A673 (cell line): ENCODE measurements at regions of chr2 and their contacts with region 1.

Region 1: GRCh38 chr2:46876741-46877384 is 38.7 kb downstream of the MCFD2 start:
- DNase-seq: peak; percentile 69
- H3K4me3 ChIP-seq: no peak overlapping the region
- H3K27ac ChIP-seq: no peak overlapping the region
- H3K4me1 ChIP-seq: peaks cover 12% of the 10 kb centered on the region
- H3K27me3 ChIP-seq: no peaks in the 10 kb centered on the region
- CTCF ChIP-seq: peak; percentile 63

Region 2: GRCh38 chr2:46632349-46632748 is 244.5 kb before region 1 on chr2:
- CTCF ChIA-PET with region 1: no interaction called
- POLR2A ChIA-PET with region 1: no interaction called
- intact Hi-C with region 1: loop called (anchors 2 kb)
- DNase-seq: peak; percentile 61
- H3K4me3 ChIP-seq: no peak overlapping the region
- H3K27ac ChIP-seq: no peak overlapping the region
- H3K4me1 ChIP-seq: no peaks in the 10 kb centered on the region
- H3K27me3 ChIP-seq: no peaks in the 10 kb centered on the region
- CTCF ChIP-seq: peak; percentile 62